B cell (primary cell): ENCODE measurements at regions of chr17 and their contacts with region 1.

Region 1: DNA sequence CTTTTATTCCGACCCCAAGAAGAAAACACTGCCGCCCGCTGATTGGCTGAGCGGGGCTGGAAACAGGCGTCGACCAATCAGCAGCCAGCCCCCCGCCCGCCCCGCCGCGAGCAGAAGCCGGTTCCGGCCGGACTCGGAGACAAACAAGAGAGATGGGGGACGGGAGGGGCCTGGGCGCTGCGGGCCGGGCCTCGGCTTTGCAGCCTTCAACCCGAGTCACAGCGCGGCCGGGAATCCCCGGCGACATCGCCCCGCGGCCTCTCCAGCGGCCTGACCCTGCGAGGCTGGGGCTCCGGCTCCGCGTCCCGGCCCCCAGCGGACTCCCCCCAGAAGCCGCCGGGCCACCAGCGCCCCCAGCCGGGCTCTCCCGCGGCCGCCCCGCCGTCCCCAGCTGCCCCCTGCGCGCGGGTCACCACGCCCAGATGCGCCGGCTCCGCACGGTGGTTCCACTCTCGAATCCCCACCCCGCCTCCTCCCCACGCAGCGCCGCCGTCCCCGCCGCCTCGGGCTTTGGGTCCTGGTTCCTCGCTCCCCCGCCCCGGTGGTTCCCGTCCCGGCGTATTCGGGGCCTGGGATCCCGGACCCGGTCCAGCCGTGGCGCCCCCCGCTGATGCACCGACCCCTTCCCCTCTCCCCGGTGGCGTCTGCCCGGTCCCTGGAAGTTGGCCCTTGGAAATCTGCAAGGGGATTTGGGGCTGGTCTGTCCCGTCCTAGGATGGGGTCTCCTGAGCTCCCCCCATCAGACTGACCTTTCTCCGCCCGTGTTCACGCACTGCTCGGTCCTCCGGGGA is 417 bp upstream of the SLC43A2 start:
- DNase-seq: peak; percentile 96
- ATAC-seq: peak; percentile 64
- H3K4me3 ChIP-seq: peak overlapping the region; percentile 52 to 97 (median 92)
- H3K4me3 Mint-ChIP-seq: peak overlapping the region; percentile 93
- H3K27ac ChIP-seq: peak overlapping the region; percentile 94 to 97
- H3K27ac Mint-ChIP-seq: peak overlapping the region; percentile 98
- H3K4me1 ChIP-seq: peaks cover 49 to 57% of the 10 kb centered on the region in 2 donors
- H3K4me1 Mint-ChIP-seq: peaks cover 49% of the 10 kb centered on the region
- H3K27me3 ChIP-seq: no peaks in the 10 kb centered on the region
- H3K27me3 Mint-ChIP-seq: no peaks in the 10 kb centered on the region
- CTCF ChIP-seq: peak; percentile 36

Region 2: GRCh38 chr17:1488030-1488863 is 140.8 kb before region 1 on chr17:
- CTCF ChIA-PET with region 1: no interaction called
- POLR2A ChIA-PET with region 1: interaction called, 4 read pairs
- intact Hi-C with region 1: loop called (anchors 1 kb)
- DNase-seq: peak; percentile 88
- ATAC-seq: peak; percentile 32
- H3K4me3 ChIP-seq: peak overlapping the region; percentile 31 to 83 (median 68)
- H3K4me3 Mint-ChIP-seq: peak overlapping the region; percentile 87
- H3K27ac ChIP-seq: peak overlapping the region; percentile 81 to 90
- H3K27ac Mint-ChIP-seq: peak overlapping the region; percentile 91
- H3K4me1 ChIP-seq: peaks cover 36 to 65% of the 10 kb centered on the region in 2 donors
- H3K4me1 Mint-ChIP-seq: peaks cover 54% of the 10 kb centered on the region
- H3K27me3 ChIP-seq: peaks cover 0 to 5% (median 0%) of the 10 kb centered on the region in 4 experiments
- H3K27me3 Mint-ChIP-seq: no peaks in the 10 kb centered on the region
- CTCF ChIP-seq: no peak

Region 3: GRCh38 chr17:1573916-1574696 is 54.9 kb before region 1 on chr17:
- CTCF ChIA-PET with region 1: interaction called, 326 read pairs
- POLR2A ChIA-PET with region 1: interaction called, 127 read pairs
- intact Hi-C with region 1: loop called (anchors 1 kb)
- DNase-seq: peak; percentile 83
- ATAC-seq: peak; percentile 73
- H3K4me3 ChIP-seq: no peak overlapping the region
- H3K4me3 Mint-ChIP-seq: no peak overlapping the region
- H3K27ac ChIP-seq: peak overlapping the region in 1 of 2 donors; percentile 10
- H3K27ac Mint-ChIP-seq: no peak overlapping the region
- H3K4me1 ChIP-seq: peaks cover 12 to 32% of the 10 kb centered on the region in 2 donors
- H3K4me1 Mint-ChIP-seq: peaks cover 20% of the 10 kb centered on the region
- H3K27me3 ChIP-seq: no peaks in the 10 kb centered on the region
- H3K27me3 Mint-ChIP-seq: no peaks in the 10 kb centered on the region
- CTCF ChIP-seq: peak; percentile 82

Region 4: GRCh38 chr17:1606352-1607033 is 22.6 kb before region 1 on chr17:
- CTCF ChIA-PET with region 1: interaction called, 6 read pairs
- POLR2A ChIA-PET with region 1: interaction called, 16 read pairs
- intact Hi-C with region 1: loop called (anchors 2 kb)
- DNase-seq: peak; percentile 18
- ATAC-seq: no peak
- H3K4me3 ChIP-seq: no peak overlapping the region
- H3K4me3 Mint-ChIP-seq: peak overlapping the region; percentile 72
- H3K27ac ChIP-seq: no peak overlapping the region
- H3K27ac Mint-ChIP-seq: peak overlapping the region; percentile 83
- H3K4me1 ChIP-seq: peaks cover 0 to 19% of the 10 kb centered on the region in 2 donors
- H3K4me1 Mint-ChIP-seq: peaks cover 27% of the 10 kb centered on the region
- H3K27me3 ChIP-seq: no peaks in the 10 kb centered on the region
- H3K27me3 Mint-ChIP-seq: no peaks in the 10 kb centered on the region
- CTCF ChIP-seq: no peak

Region 5: GRCh38 chr17:1648963-1649843 is 20.2 kb after region 1 on chr17:
- CTCF ChIA-PET with region 1: interaction called, 135 read pairs
- POLR2A ChIA-PET with region 1: interaction called, 77 read pairs
- intact Hi-C with region 1: loop called (anchors 1 kb)
- DNase-seq: peak; percentile 96
- ATAC-seq: peak; percentile 72
- H3K4me3 ChIP-seq: peak overlapping the region in 4 of 5 experiments; percentile 35 to 75 (median 60)
- H3K4me3 Mint-ChIP-seq: peak overlapping the region; percentile 79
- H3K27ac ChIP-seq: peak overlapping the region in 1 of 2 donors; percentile 28
- H3K27ac Mint-ChIP-seq: peak overlapping the region; percentile 75
- H3K4me1 ChIP-seq: peaks cover 26 to 36% of the 10 kb centered on the region in 2 donors
- H3K4me1 Mint-ChIP-seq: peaks cover 30% of the 10 kb centered on the region
- H3K27me3 ChIP-seq: no peaks in the 10 kb centered on the region
- H3K27me3 Mint-ChIP-seq: no peaks in the 10 kb centered on the region
- CTCF ChIP-seq: peak; percentile 79

Region 6: DNA sequence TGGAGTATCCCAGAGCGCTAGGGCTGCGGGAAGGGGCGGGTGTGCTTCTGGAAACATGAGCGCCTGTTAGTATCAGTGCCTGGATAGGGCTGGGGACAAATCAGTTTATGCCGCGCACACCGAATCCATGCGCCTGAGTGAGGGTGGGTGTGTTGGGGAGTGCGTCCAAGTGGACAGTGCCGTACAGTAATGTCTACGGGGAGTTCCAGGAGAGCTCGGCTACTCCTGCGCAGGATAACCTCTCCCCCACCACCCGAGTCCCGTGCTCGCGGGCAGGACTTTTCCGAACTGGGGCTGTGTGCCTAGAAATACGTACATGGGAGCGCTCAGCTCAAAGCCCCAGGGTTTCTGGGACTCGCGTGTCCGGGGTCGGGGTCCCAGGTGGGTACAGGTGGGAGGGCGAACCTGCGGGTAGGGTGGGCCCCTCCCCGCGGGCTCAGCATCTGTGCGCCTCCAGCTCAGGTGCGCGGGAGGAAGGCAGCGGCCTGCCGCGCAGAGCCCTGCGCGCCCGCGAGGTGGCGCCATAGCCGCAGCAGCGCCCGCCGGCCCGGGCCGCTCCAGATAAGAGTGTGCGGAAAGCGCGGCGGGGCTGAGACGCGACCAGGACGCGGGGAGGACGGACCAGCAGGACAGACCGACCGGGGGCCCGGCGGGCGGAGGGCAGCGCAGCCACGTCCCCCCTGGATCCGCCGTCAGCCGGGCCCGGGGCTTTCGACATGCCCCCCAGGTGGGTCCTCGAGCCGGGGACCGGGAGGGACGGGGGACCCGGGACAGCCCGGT is 425.7 kb after region 1 on chr17 and contains the start of gene HIC1:
- CTCF ChIA-PET with region 1: no interaction called
- POLR2A ChIA-PET with region 1: no interaction called
- intact Hi-C with region 1: no loop called
- DNase-seq: peak; percentile 89
- ATAC-seq: peak; percentile 38
- H3K4me3 ChIP-seq: peak within 1 kb of the TSS in 3 of 5 experiments; percentile 44 to 57 (median 52)
- H3K4me3 Mint-ChIP-seq: peak within 1 kb of the TSS; percentile 80
- H3K27ac ChIP-seq: no peak within 1 kb of the TSS
- H3K27ac Mint-ChIP-seq: peak within 1 kb of the TSS; percentile 67
- H3K4me1 ChIP-seq: peaks cover 55 to 75% of the 10 kb centered on the region in 2 donors
- H3K4me1 Mint-ChIP-seq: peaks cover 36% of the 10 kb centered on the region
- H3K27me3 ChIP-seq: peaks cover 0 to 59% (median 14%) of the 10 kb centered on the region in 4 experiments
- H3K27me3 Mint-ChIP-seq: peaks cover 7% of the 10 kb centered on the region
- CTCF ChIP-seq: peak; percentile 95
- total RNA-seq, gene HIC1: 1.5 and 1.9 TPM in 2 replicates